ENCODE measurements at regions of chr3 and their contacts with region 1.

Region 1: DNA sequence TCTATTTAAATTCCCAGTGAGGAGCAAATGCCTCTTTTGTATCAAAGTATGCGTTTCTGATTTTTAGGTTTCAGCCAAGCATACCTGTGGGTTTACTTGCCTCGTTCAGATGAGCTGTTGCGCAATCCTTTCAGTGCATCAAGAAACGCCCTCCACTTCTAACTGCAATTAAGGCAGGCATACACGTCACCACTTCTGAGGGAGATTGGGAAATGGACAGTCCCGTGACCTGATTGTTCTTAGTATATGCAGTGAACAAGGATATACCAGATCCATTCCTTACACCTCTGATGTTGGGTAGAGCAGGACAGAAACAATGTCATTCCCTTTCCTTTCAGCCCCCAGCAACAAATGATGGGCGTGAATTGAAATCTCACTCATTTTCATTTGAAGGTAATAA is 219.0 kb downstream of the ITPR1 start:
- DNase-seq: no peak
- ATAC-seq: no peak
- H3K4me3 ChIP-seq: no peak overlapping the region
- H3K27ac ChIP-seq: no peak overlapping the region
- H3K4me1 ChIP-seq: no peaks in the 10 kb centered on the region
- H3K27me3 ChIP-seq: no peaks in the 10 kb centered on the region
- CTCF ChIP-seq: no peak
- EP300 ChIP-seq: no peak
- POLR2A ChIP-seq: no peak
- RAD21 ChIP-seq: no peak

Region 2: GRCh38 chr3:3875491-3875890 is 836.7 kb before region 1 on chr3:
- CTCF ChIA-PET with region 1: no interaction called
- POLR2A ChIA-PET with region 1: no interaction called
- RAD21 ChIA-PET with region 1: no interaction called
- SMC1A ChIA-PET with region 1: no interaction called
- in situ Hi-C with region 1: no loop called
- intact Hi-C with region 1: no loop called
- DNase-seq: no peak
- ATAC-seq: no peak
- H3K4me3 ChIP-seq: no peak overlapping the region
- H3K27ac ChIP-seq: no peak overlapping the region
- H3K4me1 ChIP-seq: no peaks in the 10 kb centered on the region
- H3K27me3 ChIP-seq: no peaks in the 10 kb centered on the region; a peak in 1 of 4 replicates
- CTCF ChIP-seq: no peak
- EP300 ChIP-seq: no peak
- POLR2A ChIP-seq: no peak
- RAD21 ChIP-seq: no peak

Region 3: DNA sequence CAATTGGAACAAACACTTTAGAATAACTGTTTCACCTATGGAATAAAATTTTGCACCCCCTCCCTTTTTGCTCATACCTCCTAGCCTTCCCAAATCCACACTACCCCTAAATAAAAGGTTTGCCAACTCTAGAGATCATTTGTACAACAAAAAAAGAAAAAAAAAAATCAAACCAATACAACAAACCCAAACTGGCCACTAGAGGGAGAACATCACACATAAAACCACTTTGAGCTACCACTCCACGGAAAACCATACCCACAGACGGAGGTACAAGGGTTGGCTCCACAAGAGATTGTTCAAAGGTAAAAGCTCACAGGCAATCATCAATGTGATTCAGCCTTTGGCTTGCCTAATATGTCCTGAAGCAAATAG is 361.4 kb before region 1 on chr3:
- CTCF ChIA-PET with region 1: interaction called, 23 read pairs
- POLR2A ChIA-PET with region 1: no interaction called
- RAD21 ChIA-PET with region 1: interaction called, 12 read pairs
- SMC1A ChIA-PET with region 1: interaction called, 16 read pairs
- in situ Hi-C with region 1: no loop called
- intact Hi-C with region 1: no loop called
- DNase-seq: peak; percentile 31
- ATAC-seq: peak; percentile 96
- H3K4me3 ChIP-seq: no peak overlapping the region
- H3K27ac ChIP-seq: no peak overlapping the region
- H3K4me1 ChIP-seq: no peaks in the 10 kb centered on the region
- H3K27me3 ChIP-seq: no peaks in the 10 kb centered on the region
- CTCF ChIP-seq: peak; percentile 64 to 78 (median 73)
- EP300 ChIP-seq: no peak
- POLR2A ChIP-seq: no peak
- RAD21 ChIP-seq: peak; percentile 95

Region 4: DNA sequence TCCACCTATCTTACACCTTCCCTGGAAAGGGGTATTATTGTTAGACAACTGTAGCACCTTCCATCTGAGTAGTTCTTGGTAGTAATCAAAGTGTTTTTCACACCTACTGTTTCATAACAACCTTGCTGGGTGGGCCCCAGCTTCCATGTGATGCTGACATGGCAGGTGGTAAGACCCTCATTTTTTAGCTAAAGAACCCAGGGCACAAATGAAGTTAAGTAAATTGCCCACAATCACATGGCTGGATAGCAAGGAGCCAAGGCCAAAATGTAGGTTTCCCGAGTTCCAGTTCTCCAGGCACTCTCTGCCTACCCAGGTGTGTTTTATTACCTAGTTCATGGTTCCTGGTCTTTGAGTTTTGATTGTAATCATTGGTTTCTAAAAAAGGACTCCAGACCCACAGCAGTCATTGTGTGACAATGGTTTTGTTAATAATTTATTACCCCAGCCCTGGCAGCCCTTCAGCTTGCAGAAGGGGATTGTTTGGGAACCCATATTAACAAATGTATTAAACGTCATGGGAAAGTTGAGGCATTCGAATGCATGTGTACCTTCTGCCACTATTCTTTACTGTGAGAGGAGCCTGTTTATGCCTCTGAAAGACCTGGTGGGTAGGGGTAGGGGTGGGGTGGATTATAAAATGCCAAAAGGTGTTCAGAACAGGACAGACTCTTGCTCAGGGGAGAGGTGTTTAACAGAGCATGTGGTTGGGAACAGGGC is 44.9 kb after region 1 on chr3:
- CTCF ChIA-PET with region 1: interaction called, 7 read pairs
- POLR2A ChIA-PET with region 1: interaction called, 5 read pairs
- RAD21 ChIA-PET with region 1: interaction called, 264 read pairs
- SMC1A ChIA-PET with region 1: interaction called, 36 read pairs
- in situ Hi-C with region 1: no loop called
- intact Hi-C with region 1: no loop called
- DNase-seq: no peak
- ATAC-seq: peak; percentile 12
- H3K4me3 ChIP-seq: no peak overlapping the region
- H3K27ac ChIP-seq: peak overlapping the region; percentile 33
- H3K4me1 ChIP-seq: peaks cover 55% of the 10 kb centered on the region
- H3K27me3 ChIP-seq: no peaks in the 10 kb centered on the region
- CTCF ChIP-seq: no peak
- EP300 ChIP-seq: peak in 1 of 2 experiments; percentile 37; a peak in 2 of 4 replicates
- POLR2A ChIP-seq: no peak
- RAD21 ChIP-seq: no peak

Region 5: GRCh38 chr3:4807381-4808280 is 95.5 kb after region 1 on chr3:
- CTCF ChIA-PET with region 1: interaction called, 20 read pairs
- POLR2A ChIA-PET with region 1: no interaction called
- RAD21 ChIA-PET with region 1: interaction called, 6 read pairs
- SMC1A ChIA-PET with region 1: interaction called, 11 read pairs
- in situ Hi-C with region 1: no loop called
- intact Hi-C with region 1: no loop called
- DNase-seq: no peak
- ATAC-seq: no peak
- H3K4me3 ChIP-seq: no peak overlapping the region
- H3K27ac ChIP-seq: no peak overlapping the region
- H3K4me1 ChIP-seq: no peaks in the 10 kb centered on the region
- H3K27me3 ChIP-seq: no peaks in the 10 kb centered on the region
- CTCF ChIP-seq: no peak
- EP300 ChIP-seq: no peak
- POLR2A ChIP-seq: no peak
- RAD21 ChIP-seq: no peak

Region 6: GRCh38 chr3:4888913-4889846 is 177.0 kb after region 1 on chr3:
- CTCF ChIA-PET with region 1: interaction called, 14 read pairs
- POLR2A ChIA-PET with region 1: no interaction called
- RAD21 ChIA-PET with region 1: interaction called, 6 read pairs
- SMC1A ChIA-PET with region 1: interaction called, 6 read pairs
- in situ Hi-C with region 1: no loop called
- intact Hi-C with region 1: no loop called
- DNase-seq: peak; percentile 71
- ATAC-seq: peak; percentile 96
- H3K4me3 ChIP-seq: no peak overlapping the region; the same call in 1 of the 2 replicates
- H3K27ac ChIP-seq: peak overlapping the region; percentile 69
- H3K4me1 ChIP-seq: peaks cover 12% of the 10 kb centered on the region
- H3K27me3 ChIP-seq: no peaks in the 10 kb centered on the region
- CTCF ChIP-seq: peak in 1 of 3 experiments; percentile 45; a peak in 3 of 6 replicates
- EP300 ChIP-seq: peak; percentile 51 to 71; a peak in 3 of 4 replicates
- POLR2A ChIP-seq: no peak
- RAD21 ChIP-seq: peak; percentile 74

Region 7: DNA sequence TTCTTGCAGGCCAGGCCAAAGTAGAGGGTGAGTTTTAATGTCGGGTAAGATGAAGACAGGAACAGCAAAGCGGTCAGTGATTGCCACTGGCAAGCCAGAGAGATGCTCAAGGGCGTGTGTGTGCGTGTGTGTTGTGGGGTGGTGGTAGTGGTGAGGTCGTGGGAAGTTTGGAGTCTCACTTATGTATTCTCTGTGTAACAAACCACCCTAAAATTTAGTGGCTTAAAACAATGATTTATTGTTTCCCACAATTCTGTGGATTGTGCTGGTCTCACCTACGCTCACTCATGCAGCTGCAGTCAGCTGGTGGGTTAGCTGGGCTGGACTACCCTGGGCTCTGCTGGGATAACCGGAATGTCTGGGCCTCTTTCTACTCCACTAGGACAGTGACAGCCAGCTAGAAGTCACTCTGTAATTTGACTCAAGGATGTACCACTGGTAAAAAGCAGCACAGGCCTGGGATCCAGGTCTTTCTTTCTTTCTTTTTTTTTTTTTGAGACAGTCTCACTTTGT is 216.2 kb after region 1 on chr3:
- CTCF ChIA-PET with region 1: no interaction called
- POLR2A ChIA-PET with region 1: no interaction called
- RAD21 ChIA-PET with region 1: no interaction called
- SMC1A ChIA-PET with region 1: no interaction called
- in situ Hi-C with region 1: no loop called
- intact Hi-C with region 1: no loop called
- DNase-seq: no peak
- ATAC-seq: peak; percentile 58
- H3K4me3 ChIP-seq: no peak overlapping the region
- H3K27ac ChIP-seq: no peak overlapping the region
- H3K4me1 ChIP-seq: peaks cover 19% of the 10 kb centered on the region
- H3K27me3 ChIP-seq: no peaks in the 10 kb centered on the region
- CTCF ChIP-seq: no peak
- EP300 ChIP-seq: peak; percentile 18 to 20; a peak in 2 of 4 replicates
- POLR2A ChIP-seq: no peak
- RAD21 ChIP-seq: no peak

Region 8: DNA sequence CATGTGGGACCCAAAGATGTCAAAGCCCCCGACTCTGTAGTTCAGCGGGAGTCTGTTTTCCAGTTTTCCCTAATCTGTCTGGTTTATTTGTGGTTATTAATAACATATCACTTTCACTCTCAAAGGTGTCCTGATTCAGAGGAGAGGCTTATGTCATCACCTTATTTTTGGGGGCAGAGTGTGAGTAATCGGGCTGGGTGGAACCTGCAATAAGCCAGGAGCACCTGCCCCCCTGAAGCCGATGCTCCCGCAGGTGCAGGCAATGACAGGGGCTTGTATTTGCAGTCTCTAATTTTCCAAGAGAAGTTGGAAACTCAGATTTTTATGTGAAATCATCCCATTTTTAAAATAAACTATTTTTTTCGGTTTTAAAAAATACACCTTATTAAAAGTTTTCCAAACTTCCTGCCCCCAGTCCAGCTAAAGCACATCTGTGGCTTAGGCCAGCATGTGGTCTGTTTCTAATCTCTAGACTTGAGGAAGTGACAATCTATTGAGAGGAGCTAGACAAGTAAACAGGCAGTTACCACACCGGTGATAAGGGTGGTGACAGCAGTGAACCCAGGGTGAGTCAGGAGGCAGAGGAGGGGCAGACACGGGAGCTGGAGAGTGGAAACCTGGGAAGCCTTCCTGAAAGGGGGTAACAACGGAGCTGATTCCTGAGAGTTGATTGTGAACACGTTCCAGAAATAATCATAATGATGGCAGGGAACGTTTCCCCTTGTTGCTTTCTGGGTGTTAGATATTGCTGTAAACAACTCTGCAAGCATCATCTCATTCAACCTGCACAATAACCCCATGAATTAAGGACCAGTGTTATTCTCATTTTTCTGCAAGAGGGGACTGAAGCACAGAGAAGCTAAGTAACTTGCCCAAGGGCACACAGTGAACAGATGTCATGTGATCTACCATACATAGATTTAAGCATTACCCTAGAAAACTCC is 304.3 kb after region 1 on chr3:
- CTCF ChIA-PET with region 1: interaction called, 63 read pairs
- POLR2A ChIA-PET with region 1: interaction called, 5 read pairs
- RAD21 ChIA-PET with region 1: interaction called, 22 read pairs
- SMC1A ChIA-PET with region 1: interaction called, 6 read pairs
- in situ Hi-C with region 1: no loop called
- intact Hi-C with region 1: no loop called
- DNase-seq: no peak
- ATAC-seq: peak; percentile 63
- H3K4me3 ChIP-seq: no peak overlapping the region
- H3K27ac ChIP-seq: no peak overlapping the region
- H3K4me1 ChIP-seq: peaks cover 43% of the 10 kb centered on the region
- H3K27me3 ChIP-seq: no peaks in the 10 kb centered on the region
- CTCF ChIP-seq: no peak
- EP300 ChIP-seq: peak; percentile 69 to 76; a peak in 2 of 4 replicates
- POLR2A ChIP-seq: no peak
- RAD21 ChIP-seq: no peak

Region 9: DNA sequence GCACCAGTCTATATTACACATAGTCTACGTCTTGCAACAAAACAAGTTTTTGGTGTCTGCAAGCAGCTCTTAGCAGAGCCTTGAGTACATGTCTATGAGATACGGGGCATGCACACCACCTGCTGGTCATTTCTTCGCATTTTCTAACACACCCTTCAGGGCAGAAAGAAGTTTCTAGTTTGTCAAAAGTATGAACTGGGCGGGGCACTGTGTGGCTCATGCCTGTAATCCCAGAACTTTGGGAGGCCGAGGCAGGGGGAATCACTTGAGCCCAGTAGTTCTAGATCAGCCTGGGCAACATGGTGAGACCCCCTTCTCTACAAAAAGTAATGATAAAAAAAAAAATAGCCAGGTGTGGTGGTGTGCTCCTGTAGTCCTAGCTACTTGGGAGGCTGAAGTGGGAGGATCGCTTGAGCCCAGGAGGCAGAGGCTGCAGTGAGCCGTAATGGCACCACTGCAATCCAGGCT is 345.7 kb after region 1 on chr3:
- CTCF ChIA-PET with region 1: interaction called, 201 read pairs
- POLR2A ChIA-PET with region 1: interaction called, 5 read pairs
- RAD21 ChIA-PET with region 1: interaction called, 148 read pairs
- SMC1A ChIA-PET with region 1: interaction called, 203 read pairs
- in situ Hi-C with region 1: loop called (anchors 5 kb)
- intact Hi-C with region 1: loop called (anchors 1 kb)
- DNase-seq: peak; percentile 75
- ATAC-seq: peak; percentile 93
- H3K4me3 ChIP-seq: no peak overlapping the region
- H3K27ac ChIP-seq: no peak overlapping the region
- H3K4me1 ChIP-seq: peaks cover 34% of the 10 kb centered on the region
- H3K27me3 ChIP-seq: no peaks in the 10 kb centered on the region; a peak in 1 of 4 replicates
- CTCF ChIP-seq: peak; percentile 70 to 87 (median 76)
- EP300 ChIP-seq: no peak
- POLR2A ChIP-seq: no peak
- RAD21 ChIP-seq: peak; percentile 99

Measured in GM12878 (cell line).